ENCODE measurements at regions of chr11 and their contacts with region 1.

Region 1: GRCh38 chr11:65378221-65378907 is 4.1 kb downstream of the SLC25A45 start:
- DNase-seq: peak in 1 of 7 donors; percentile 31
- H3K4me3 ChIP-seq: no peak overlapping the region
- H3K27ac ChIP-seq: no peak overlapping the region
- H3K4me1 ChIP-seq: peaks cover 18 to 22% of the 10 kb centered on the region in 2 donors
- H3K27me3 ChIP-seq: no peaks in the 10 kb centered on the region
- CTCF ChIP-seq: no peak
- POLR2A ChIP-seq: no peak

Region 2: DNA sequence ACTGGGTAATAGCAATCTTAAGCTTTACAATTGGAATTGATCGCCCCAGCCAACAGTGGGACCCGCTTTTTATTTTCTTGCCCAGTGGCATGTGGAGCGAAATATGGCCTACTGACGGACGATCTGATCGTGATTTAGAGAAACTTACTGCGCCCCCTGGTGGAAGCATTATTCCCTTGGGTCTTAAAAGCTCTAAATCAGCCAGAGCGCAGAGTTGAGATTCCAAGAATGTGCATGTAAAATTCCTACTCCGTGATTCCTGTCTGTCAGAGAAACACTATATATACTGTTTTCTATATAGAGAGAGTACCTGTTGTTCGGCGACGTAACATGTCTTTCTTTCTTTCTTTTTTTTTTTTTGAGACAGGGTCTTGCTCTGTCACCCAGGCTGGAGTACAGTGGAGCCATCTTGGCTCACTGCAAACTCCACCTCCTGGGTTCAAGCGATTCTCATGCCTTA is 48.4 kb before region 1 on chr11:
- intact Hi-C with region 1: no loop called
- DNase-seq: peak; percentile 83 to 97 (median 91)
- H3K4me3 ChIP-seq: no peak overlapping the region
- H3K27ac ChIP-seq: peak overlapping the region in 2 of 5 donors; percentile 7 to 32
- H3K4me1 ChIP-seq: peaks cover 7% of the 10 kb centered on the region in 2 donors
- H3K27me3 ChIP-seq: no peaks in the 10 kb centered on the region
- CTCF ChIP-seq: peak; percentile 70 to 86 (median 82)
- POLR2A ChIP-seq: no peak

Region 3: GRCh38 chr11:65425105-65425970 is 47.0 kb after region 1 on chr11:
- intact Hi-C with region 1: no loop called
- DNase-seq: peak in 6 of 7 donors; percentile 50 to 84 (median 60)
- H3K4me3 ChIP-seq: peak overlapping the region; percentile 64 to 84 (median 82)
- H3K27ac ChIP-seq: peak overlapping the region; percentile 91 to 100 (median 100)
- H3K4me1 ChIP-seq: peaks cover 16 to 51% of the 10 kb centered on the region in 2 donors
- H3K27me3 ChIP-seq: no peaks in the 10 kb centered on the region
- CTCF ChIP-seq: peak in 3 of 6 experiments; percentile 26 to 54 (median 50)
- POLR2A ChIP-seq: peak in 1 of 2 donors; percentile 54

Region 4: DNA sequence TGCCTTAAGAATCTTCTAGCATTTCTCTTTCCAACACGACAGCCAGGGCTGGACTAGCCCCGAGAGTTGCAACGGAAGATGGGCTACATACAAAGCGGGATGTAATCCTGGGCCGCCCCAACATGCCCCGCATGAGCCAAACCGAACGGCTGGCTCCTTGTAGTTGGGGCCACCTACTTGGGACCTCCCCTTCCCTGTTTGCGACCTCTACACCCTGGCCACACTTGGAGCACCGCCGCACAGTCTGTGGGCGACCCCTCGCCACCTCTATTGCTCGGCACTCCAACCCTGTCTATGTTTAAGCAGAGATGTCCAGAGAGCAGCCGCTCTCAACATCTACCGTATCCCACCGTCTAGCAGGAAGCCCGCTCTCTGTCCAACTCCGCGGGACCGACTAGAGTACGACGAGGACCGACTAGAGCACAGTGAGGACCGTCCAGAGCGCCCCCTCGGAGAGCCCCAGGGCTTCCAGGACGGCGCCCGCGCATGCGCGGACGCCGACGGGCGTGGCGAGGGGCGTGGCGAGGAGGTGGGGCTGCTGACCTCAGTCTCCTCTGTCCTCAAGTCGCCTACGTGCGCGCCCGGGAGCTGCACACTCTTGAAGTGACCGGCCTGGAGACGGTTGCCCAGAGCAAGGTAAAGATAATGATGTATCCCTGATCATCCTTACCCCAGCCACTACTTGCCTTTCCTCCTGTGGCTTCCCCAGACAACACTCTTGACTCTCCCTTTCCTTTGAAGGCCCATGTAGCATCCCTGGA is 76.5 kb after region 1 on chr11:
- intact Hi-C with region 1: loop called in 1 of 2 experiments (anchors 10 kb)
- DNase-seq: peak; percentile 90 to 95 (median 93)
- H3K4me3 ChIP-seq: peak overlapping the region in 2 of 4 donors; percentile 7 to 53
- H3K27ac ChIP-seq: peak overlapping the region; percentile 53 to 89 (median 75)
- H3K4me1 ChIP-seq: peaks cover 5 to 10% of the 10 kb centered on the region in 2 donors
- H3K27me3 ChIP-seq: no peaks in the 10 kb centered on the region
- CTCF ChIP-seq: no peak
- POLR2A ChIP-seq: peak; percentile 31 to 87

Region 5: GRCh38 chr11:65487413-65488272 is 109.3 kb after region 1 on chr11:
- intact Hi-C with region 1: no loop called
- DNase-seq: peak; percentile 98 to 100 (median 100)
- H3K4me3 ChIP-seq: peak overlapping the region in 1 of 4 donors; percentile 45
- H3K27ac ChIP-seq: peak overlapping the region; percentile 95 to 100 (median 99)
- H3K4me1 ChIP-seq: peaks cover 67 to 77% of the 10 kb centered on the region in 2 donors
- H3K27me3 ChIP-seq: no peaks in the 10 kb centered on the region
- CTCF ChIP-seq: no peak
- POLR2A ChIP-seq: peak in 1 of 2 donors; percentile 54